ENCODE measurements at regions of chr7 and their contacts with region 1.

Region 1: DNA sequence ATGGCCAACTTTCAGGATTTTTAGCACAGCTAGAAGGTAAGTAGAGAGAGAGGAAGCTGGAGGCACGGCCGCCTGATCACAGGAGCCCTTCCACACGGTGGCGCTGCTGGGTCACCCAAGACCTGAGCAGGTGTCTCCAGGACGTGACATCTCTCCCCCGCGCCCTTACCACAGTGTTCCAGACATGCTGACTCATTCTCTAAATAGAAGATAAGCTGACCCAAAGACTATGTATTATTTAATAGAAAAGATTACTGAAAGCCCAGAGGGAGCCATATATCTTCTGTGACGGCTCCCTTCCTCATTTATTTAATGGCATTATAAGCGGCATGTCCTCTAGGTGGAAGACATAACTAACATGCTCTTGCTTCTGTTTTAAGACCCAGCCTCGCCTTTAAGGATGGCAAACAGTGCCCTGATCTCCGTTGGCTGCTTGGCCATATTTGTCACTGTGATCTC is 26.0 kb upstream of the MALSU1 start:
- DNase-seq: peak; percentile 94
- ATAC-seq: peak; percentile 99
- H3K4me3 Mint-ChIP-seq: peak overlapping the region; percentile 67
- H3K27ac Mint-ChIP-seq: peak overlapping the region; percentile 33
- H3K4me1 Mint-ChIP-seq: peaks cover 15% of the 10 kb centered on the region
- H3K27me3 Mint-ChIP-seq: peaks cover 9% of the 10 kb centered on the region

Region 2: GRCh38 chr7:22896917-22897316 is 376.3 kb before region 1 on chr7:
- CTCF ChIA-PET with region 1: no interaction called
- POLR2A ChIA-PET with region 1: no interaction called
- DNase-seq: no peak
- ATAC-seq: peak; percentile 51
- H3K4me3 Mint-ChIP-seq: no peak overlapping the region
- H3K27ac Mint-ChIP-seq: no peak overlapping the region
- H3K4me1 Mint-ChIP-seq: peaks cover 9% of the 10 kb centered on the region
- H3K27me3 Mint-ChIP-seq: peaks cover 2% of the 10 kb centered on the region

Region 3: GRCh38 chr7:23093546-23093945 is 179.6 kb before region 1 on chr7:
- CTCF ChIA-PET with region 1: no interaction called
- POLR2A ChIA-PET with region 1: no interaction called
- DNase-seq: no peak
- ATAC-seq: no peak
- H3K4me3 Mint-ChIP-seq: no peak overlapping the region
- H3K27ac Mint-ChIP-seq: no peak overlapping the region
- H3K4me1 Mint-ChIP-seq: no peaks in the 10 kb centered on the region
- H3K27me3 Mint-ChIP-seq: no peaks in the 10 kb centered on the region

Region 4: DNA sequence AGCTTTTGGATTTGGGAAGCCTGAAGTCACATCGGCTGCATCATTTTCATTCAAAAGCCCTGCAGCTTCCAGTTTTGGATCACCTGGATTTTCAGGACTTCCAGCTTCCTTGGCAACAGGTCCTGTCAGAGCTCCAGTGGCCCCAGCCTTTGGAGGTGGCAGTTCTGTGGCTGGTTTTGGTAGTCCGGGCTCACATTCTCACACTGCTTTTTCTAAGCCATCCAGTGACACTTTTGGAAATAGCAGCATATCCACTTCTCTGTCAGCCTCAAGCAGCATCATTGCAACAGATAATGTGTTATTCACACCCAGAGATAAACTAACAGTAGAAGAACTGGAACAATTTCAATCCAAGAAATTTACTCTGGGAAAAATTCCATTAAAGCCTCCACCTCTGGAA is 72.8 kb before region 1 on chr7:
- CTCF ChIA-PET with region 1: no interaction called
- POLR2A ChIA-PET with region 1: no interaction called
- DNase-seq: no peak
- ATAC-seq: no peak
- H3K4me3 Mint-ChIP-seq: no peak overlapping the region
- H3K27ac Mint-ChIP-seq: no peak overlapping the region
- H3K4me1 Mint-ChIP-seq: peaks cover 1% of the 10 kb centered on the region
- H3K27me3 Mint-ChIP-seq: peaks cover 1% of the 10 kb centered on the region

Region 5: DNA sequence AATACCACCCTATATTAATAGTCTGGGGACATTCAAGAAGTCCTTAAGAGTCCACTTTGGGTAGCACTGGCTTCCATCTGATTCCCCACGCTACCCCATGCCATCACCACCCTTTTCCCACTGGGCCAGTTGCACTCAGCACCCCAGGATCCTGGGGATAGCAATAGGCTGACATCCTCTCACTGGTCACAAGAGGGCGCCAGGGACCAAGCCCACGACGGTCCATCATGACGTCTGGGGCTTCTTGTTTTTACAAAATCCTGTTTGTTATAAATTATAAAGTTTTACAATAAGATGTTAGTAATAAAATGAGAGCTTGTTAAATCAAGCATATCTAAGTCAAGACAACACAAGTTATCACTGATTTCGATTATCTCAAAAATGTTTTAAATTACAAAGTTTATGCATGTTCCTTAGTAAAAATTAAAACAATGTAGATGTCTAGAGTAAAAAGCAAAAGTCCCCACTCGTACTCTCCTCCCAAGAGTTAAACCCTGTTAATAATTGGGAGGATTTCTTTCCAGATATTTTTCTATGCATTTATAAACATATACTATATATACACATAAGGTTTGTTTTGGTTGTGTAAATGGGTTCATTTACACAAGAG is 11.2 kb before region 1 on chr7:
- CTCF ChIA-PET with region 1: interaction called, 54 read pairs
- POLR2A ChIA-PET with region 1: no interaction called
- DNase-seq: peak; percentile 73
- ATAC-seq: peak; percentile 94
- H3K4me3 Mint-ChIP-seq: no peak overlapping the region
- H3K27ac Mint-ChIP-seq: no peak overlapping the region
- H3K4me1 Mint-ChIP-seq: no peaks in the 10 kb centered on the region
- H3K27me3 Mint-ChIP-seq: peaks cover 7% of the 10 kb centered on the region

Region 6: DNA sequence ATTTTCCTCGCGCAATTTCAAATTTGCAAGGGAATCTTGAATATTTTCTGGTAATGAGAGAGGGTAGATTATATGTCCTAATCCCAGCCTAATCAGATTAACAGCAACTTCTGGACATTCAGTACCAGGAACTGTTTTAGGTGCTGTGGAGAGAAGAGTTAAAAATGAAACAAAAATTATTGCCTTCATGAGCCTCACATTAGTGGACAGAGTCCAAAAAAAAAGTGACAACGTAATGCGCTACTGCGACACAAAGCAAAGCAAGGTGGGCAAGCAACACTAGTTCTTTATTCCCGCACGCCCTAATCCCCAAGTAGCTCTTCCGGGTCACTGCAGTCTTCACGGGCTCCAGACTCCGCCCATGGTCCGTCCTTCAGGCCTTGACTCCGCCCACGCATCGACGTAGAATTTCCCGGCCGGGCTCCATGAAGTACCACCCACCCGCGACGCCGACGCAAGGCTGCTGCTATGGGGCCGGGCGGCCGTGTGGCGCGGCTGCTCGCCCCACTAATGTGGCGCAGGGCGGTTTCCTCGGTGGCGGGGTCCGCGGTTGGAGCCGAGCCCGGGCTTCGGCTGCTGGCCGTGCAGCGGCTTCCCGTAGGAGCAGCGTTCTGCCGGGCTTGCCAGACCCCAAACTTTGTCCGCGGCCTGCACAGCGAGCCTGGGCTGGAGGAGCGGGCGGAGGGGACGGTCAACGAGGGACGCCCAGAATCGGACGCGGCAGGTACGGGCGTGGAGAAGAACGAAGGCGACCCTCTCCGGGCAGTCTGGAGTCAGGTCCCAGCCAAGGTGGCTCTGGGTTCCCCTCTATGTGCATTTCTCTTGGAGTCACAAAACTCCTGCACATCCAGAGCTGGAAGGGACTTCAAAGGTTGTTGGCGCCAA is 26.0 kb after region 1 on chr7 and contains the start of gene MALSU1:
- CTCF ChIA-PET with region 1: interaction called, 16 read pairs
- POLR2A ChIA-PET with region 1: interaction called, 6 read pairs
- DNase-seq: peak; percentile 98
- ATAC-seq: peak; percentile 100
- H3K4me3 Mint-ChIP-seq: peak within 1 kb of the TSS; percentile 84
- H3K27ac Mint-ChIP-seq: peak within 1 kb of the TSS; percentile 89
- H3K4me1 Mint-ChIP-seq: peaks cover 35% of the 10 kb centered on the region
- H3K27me3 Mint-ChIP-seq: no peaks in the 10 kb centered on the region
- total RNA-seq, gene MALSU1: 53.3 to 55.0 TPM

Region 7: GRCh38 chr7:23357190-23358093 is 84.3 kb after region 1 on chr7:
- CTCF ChIA-PET with region 1: interaction called, 27 read pairs
- POLR2A ChIA-PET with region 1: no interaction called
- DNase-seq: no peak
- ATAC-seq: peak; percentile 26
- H3K4me3 Mint-ChIP-seq: no peak overlapping the region
- H3K27ac Mint-ChIP-seq: no peak overlapping the region
- H3K4me1 Mint-ChIP-seq: peaks cover 14% of the 10 kb centered on the region
- H3K27me3 Mint-ChIP-seq: peaks cover 12% of the 10 kb centered on the region

Region 8: DNA sequence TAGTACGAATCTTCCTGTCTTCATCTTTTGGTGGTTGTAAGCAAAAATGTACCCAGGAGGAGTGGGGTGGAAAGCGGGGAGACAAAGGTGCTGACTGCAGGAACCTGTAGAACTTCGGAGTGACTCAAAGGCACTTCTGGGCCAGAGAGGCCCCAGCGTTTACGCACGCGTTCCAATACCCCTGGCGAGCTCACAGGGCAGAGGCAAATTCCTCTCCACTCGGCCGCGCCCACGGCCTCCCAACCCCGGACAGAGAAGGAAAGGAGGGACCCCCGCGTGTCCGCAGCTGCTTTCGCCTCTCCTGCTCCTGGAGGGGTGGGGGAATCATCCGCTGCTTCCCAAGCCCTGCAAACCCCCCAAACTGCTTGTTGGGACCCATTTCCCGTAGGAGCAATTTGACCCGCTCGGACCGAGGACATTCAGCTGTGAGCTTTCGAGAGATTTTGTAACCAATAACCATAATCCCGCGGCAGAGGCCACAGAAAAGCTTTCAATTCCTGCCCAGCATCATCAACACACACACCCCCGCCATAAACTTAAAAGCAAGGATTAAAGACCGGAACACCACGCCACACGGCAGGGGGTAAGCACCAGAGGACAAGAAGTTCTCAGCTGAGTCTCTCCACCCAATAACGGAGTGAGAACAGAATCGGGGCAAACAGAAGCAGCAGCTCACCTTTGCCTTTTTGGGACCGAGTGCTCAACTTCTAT is 194.8 kb after region 1 on chr7:
- CTCF ChIA-PET with region 1: interaction called, 17 read pairs
- POLR2A ChIA-PET with region 1: no interaction called
- DNase-seq: no peak
- ATAC-seq: peak; percentile 19
- H3K4me3 Mint-ChIP-seq: peak overlapping the region; percentile 51
- H3K27ac Mint-ChIP-seq: no peak overlapping the region
- H3K4me1 Mint-ChIP-seq: peaks cover 37% of the 10 kb centered on the region
- H3K27me3 Mint-ChIP-seq: peaks cover 58% of the 10 kb centered on the region

Region 9: GRCh38 chr7:23546897-23547572 is 273.9 kb after region 1 on chr7:
- CTCF ChIA-PET with region 1: interaction called, 138 read pairs
- POLR2A ChIA-PET with region 1: no interaction called
- DNase-seq: peak; percentile 86
- ATAC-seq: peak; percentile 82
- H3K4me3 Mint-ChIP-seq: no peak overlapping the region
- H3K27ac Mint-ChIP-seq: no peak overlapping the region
- H3K4me1 Mint-ChIP-seq: peaks cover 11% of the 10 kb centered on the region
- H3K27me3 Mint-ChIP-seq: peaks cover 2% of the 10 kb centered on the region